ENCODE measurements at regions of chr2 and their contacts with region 1.

Region 1: DNA sequence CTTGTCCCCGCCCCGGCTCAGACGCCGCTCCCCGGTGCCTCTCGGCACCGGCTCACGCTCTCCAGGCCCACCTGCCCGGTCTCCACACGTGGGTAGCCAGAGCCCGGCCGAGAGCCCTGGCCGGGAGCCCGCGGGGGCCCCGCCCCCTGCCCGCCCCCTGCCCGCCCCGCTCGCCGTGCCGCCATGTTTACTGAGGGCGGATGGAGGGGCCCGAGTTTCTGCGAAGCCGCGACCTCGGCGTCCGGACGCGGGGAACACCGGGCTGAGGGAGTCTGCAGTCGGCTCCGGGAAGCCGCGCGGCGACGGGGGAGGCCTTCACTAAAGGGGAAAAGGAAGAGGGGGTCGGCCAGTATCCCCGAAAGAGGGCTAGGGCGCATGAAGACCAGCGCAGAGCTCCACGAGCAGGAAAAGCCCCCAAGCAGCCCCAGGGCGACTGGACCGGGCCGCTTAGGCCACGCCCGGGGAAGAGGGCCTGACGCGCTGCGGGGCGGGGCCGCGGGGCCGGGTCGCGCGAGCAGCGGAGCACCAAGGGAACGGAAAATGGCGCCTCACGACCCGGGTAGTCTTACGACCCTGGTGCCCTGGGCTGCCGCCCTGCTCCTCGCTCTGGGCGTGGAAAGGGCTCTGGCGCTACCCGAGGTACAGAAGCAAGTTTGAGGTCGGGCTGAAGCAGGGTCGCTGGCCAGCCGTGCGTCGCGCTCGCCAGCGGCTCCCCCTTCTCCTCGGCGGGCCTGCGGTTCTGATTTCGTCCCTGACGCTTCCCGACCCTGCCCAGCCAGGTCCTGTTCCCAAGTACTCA is at the starts of genes ATRAID and SLC5A6:
- DNase-seq: peak; percentile 88
- H3K4me3 ChIP-seq: peak within 1 kb of the TSS; percentile 62 to 93 (median 89)
- H3K27ac ChIP-seq: peak within 1 kb of the TSS; percentile 98
- H3K4me1 ChIP-seq: peaks cover 32% of the 10 kb centered on the region
- H3K27me3 ChIP-seq: no peaks in the 10 kb centered on the region
- CTCF ChIP-seq: no peak
- total RNA-seq, gene ATRAID: 76.5 to 127 TPM
- total RNA-seq, gene SLC5A6: 19.7 to 22.8 TPM

Region 2: DNA sequence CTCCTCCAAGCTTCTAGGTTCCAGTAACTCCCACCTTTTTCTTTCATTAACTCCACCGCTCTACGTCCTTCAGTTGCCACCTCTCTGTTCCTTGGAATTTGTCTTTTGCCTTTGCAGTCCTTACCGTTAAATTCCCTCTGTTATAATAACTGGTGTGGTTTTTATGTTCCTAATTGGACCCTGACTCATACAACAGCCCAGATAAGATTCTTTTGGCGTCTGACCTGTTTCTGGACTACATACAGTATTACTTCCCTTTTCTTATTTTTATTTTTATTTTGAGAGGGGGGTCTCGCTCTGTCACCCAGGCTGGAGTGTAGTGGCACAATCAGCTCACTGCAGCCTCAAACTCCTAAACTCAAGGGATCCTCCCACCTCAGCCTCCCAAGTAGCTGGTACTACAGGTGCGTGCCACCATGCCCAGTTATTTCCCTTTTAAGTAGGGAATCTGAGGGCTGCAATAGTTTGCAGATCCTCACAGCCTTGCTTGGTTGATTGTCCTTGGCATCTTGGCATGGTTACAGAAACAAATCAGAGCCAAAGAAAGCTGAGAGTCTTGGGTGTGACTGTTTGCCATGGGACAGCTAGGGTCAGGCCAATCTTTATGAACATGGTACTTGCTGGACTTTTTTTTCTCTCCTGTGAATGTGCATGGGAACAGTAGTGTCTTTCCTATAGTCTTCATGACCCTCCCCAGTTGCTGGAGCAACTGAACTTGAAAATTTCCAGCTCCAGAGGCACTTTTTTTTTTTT is 41.3 kb before region 1 on chr2:
- CTCF ChIA-PET with region 1: no interaction called
- dilution Hi-C with region 1: no loop called
- in situ Hi-C with region 1: no loop called
- intact Hi-C with region 1: loop called (anchors 2 kb)
- DNase-seq: no peak
- H3K4me3 ChIP-seq: no peak overlapping the region
- H3K27ac ChIP-seq: no peak overlapping the region
- H3K4me1 ChIP-seq: no peaks in the 10 kb centered on the region
- H3K27me3 ChIP-seq: no peaks in the 10 kb centered on the region
- CTCF ChIP-seq: no peak